ENCODE measurements at regions of chr7 and their contacts with region 1.

Region 1: GRCh38 chr7:35985126-35985754 is 167.8 kb upstream of the EEPD1 start:
- DNase-seq: peak; percentile 89 to 92
- ATAC-seq: peak; percentile 91
- H3K4me3 ChIP-seq: no peak overlapping the region
- H3K27ac ChIP-seq: no peak overlapping the region
- H3K4me1 ChIP-seq: peaks cover 3 to 4% of the 10 kb centered on the region in 2 donors
- H3K27me3 ChIP-seq: no peaks in the 10 kb centered on the region

Region 2: DNA sequence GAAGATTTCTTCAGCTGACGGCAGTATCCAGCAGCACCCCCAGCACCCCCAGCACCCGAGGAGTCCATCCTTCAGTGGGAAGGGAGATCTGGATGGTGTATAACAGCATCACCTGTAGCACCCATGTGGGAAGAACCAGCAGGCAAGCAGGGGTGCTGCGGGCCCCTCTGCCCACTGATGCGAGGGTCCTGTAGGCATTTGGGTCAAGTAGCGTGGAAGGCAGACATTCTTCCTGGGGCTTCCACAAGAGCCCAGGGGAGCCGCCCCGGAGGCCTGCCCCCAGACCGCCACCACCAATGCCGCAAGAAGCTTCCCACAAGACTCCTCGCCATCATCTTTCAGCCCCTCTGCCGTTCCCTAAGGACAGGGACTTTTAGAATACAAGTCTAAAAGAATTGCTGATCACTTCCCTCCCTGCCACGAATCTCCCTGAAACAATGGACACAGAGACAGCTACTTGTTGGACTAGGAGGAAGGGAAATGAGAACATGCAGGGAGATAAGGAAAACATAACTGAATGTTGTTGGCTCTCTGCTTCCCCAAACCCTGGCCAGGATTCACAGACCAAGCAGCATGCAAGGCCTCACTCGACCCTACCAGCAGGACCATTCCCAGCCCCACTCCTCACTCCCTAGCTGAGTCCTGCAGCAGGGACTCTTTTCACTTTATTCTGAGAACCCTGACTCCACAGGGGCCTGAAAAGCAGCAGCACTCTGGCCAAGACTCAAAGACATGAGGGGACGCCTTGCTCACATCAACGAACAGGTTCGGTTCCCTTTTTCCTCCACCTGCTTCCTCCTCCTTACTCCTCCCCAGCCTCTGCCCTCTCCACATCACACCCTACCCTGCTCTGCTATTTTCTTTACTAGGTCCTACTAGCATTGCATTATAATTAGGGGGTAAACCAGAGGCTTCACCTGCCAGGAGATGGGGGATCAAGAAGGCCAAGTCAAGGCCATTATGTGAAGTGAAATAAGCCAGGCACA is 454.8 kb before region 1 on chr7:
- intact Hi-C with region 1: no loop called
- DNase-seq: no peak
- ATAC-seq: no peak
- H3K4me3 ChIP-seq: no peak overlapping the region
- H3K27ac ChIP-seq: no peak overlapping the region
- H3K4me1 ChIP-seq: no peaks in the 10 kb centered on the region
- H3K27me3 ChIP-seq: no peaks in the 10 kb centered on the region

Region 3: DNA sequence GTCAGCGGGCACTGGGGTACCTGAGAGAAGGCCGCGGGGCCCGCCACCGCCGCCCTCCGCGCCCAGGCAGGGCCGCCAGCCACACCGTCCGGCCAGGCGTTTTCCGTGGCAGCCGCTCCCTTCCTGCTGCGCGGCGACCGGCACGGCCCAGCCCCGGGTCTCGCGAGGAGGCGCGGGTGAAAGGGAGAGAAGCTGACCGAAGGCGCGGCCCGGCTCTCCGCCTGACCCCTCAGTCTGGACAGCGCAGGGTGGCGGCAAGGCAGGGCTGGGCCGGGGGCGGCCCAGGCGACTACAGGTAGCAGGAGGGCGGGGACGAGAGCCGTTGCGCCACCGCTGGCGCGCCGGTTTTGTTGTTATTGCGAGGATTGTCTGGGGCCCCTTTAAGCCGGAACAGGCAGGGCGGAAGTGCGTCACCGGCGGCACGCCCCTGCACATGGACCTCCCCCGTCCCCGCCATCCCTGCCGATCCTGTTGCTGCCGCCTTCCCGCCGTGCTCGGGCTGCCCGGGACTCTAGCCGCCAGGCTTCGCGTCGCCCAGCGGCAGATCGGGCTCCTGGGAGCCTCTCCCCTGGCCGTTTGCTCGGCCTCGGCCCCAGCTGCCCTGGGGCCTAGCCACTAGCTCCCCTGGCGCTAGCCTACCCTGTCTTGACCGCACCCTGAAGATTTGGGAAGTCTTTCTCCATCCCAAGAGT is 290.3 kb before region 1 on chr7 and contains the start of gene HERPUD2:
- intact Hi-C with region 1: loop called in 1 of 2 experiments (anchors 10 kb)
- DNase-seq: peak; percentile 96 to 97
- ATAC-seq: peak; percentile 98
- H3K4me3 ChIP-seq: peak within 1 kb of the TSS; percentile 90
- H3K27ac ChIP-seq: peak within 1 kb of the TSS; percentile 37 to 44
- H3K4me1 ChIP-seq: peaks cover 0 to 6% of the 10 kb centered on the region in 2 donors
- H3K27me3 ChIP-seq: no peaks in the 10 kb centered on the region
- total RNA-seq, gene HERPUD2: 24.7 to 26.4 TPM

Region 4: DNA sequence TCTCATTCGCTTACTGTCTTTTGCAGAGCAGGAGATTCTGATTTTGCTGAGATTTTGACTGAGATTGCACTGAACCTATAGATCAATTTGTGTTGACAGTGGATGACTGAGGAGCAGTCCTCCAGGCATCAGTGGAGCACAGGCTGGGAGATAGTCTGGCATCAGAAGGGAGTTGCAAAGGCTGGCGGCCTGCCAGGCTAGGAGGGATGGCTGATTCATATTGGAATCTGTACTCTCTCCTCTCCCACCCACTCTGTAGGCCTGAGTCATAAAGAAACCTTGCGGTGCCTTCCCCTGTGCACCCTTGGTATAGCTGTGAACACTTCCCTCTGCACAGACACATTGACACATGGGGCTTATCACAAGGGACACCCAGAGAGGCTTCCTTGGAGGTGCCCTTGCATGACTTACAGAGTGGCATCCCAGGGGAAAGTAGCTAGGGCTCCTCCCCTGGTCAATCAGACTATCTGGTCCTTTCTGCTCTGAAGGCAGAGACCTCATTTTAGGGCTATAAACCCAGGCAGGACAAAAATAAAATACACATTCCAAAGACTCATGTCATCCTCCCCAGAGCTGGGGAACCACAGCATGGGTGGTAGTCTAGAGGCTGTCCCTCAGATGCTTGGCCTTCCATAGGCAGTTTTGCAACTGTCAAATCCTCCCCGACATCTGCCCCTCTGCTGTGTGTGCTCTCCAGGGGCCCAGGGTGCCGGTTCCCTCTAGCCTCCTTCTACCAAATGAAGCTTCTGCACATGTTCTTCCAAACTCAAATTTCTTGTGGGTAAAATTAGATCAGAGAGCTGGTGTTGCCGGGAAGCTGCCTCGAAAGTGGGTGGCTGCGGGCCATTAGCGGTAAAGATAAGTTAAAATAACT is 130.4 kb after region 1 on chr7:
- intact Hi-C with region 1: loop called in 1 of 2 experiments (anchors 2 kb)
- DNase-seq: peak; percentile 91 to 96
- ATAC-seq: peak; percentile 61
- H3K4me3 ChIP-seq: no peak overlapping the region
- H3K27ac ChIP-seq: peak overlapping the region; percentile 61 to 100
- H3K4me1 ChIP-seq: peaks cover 5 to 9% of the 10 kb centered on the region in 2 donors
- H3K27me3 ChIP-seq: no peaks in the 10 kb centered on the region

Region 5: DNA sequence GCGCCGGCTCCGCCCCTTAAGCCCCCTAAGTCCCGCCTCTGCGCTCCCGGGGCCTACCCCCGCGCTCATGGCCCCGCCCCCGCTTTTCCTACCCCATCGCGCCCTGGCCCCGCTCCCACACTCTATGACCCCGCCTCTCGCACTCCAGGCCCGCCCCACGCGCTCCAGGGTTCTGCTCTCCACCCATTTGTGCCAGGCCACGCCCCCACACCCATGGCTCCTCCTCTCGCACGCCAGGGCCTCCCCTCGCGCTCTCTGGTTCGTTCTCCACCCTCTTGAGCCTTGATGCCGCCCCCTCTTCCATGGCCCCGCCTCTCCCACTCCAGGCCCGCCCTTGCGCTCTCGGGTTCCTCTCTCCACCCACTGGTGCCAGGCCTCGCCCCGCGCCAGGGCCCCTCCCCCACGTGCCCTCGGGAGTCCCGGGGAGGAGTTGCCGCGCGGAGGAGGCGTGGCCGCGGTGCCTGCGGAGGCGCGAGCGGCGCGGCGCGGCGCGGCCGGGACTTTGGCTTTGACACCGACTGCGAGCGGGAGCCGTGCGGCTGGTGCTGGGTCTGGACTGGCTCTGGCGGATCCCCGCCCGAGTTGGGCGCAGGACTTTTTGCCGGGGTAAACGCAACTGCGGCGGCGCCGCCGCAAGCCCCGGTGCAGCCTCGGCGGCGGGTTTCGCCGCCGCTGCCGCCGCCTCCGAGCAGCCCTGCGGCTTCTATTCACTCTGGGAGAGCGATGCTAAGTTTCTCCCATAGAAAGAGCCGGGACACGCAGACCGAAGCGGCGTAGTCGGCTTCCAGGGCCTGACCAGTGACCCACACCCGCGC is 167.7 kb after region 1 on chr7 and contains the start of gene EEPD1:
- intact Hi-C with region 1: loop called in 1 of 2 experiments (anchors 5 kb)
- DNase-seq: peak; percentile 100
- ATAC-seq: peak; percentile 98
- H3K4me3 ChIP-seq: peak within 1 kb of the TSS; percentile 79 to 90
- H3K27ac ChIP-seq: peak within 1 kb of the TSS; percentile 3 to 80
- H3K4me1 ChIP-seq: peaks cover 0 to 4% of the 10 kb centered on the region in 2 donors
- H3K27me3 ChIP-seq: no peaks in the 10 kb centered on the region
- total RNA-seq, gene EEPD1: 14.4 to 15.4 TPM

Region 6: DNA sequence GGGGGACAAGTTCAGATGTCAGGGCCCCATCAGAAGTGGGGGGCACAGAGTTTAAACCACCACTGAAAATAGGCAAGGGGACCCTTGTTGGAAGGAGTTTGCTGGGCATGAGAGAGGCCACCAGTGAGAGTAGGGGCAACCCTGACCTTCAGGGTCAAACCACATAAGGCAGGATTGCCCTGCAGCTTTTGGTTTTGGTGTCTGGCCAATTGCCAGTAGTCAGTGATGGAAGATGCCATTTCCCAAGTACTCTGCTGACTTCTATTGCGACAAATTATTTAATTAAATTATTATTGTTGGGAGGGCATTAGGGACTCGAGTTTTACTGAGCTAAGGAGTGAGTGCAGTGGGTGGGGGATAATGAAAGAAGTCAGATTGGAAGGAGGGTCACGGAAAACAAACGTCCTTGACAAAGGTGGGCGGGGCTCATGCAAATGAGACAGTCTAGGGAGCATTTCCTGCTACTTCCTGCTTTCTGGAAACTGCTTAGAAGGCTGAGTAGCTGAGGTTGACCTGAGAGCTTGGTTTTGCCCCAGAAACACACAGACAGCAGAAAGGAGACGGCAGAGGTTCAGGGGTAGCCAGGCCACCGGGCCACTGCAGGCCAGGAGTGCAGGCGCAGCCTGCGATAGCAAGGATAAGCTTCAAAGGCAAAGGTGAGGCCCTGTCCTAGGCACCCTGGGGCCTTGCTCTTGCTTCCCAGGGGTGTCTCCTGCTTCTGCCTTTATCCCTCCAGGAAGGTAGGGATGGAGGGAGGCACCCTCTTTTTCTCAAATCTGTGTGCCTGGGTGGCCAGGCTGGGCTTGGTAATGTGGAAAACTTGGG is 330.3 kb after region 1 on chr7:
- intact Hi-C with region 1: loop called (anchors 2 kb)
- DNase-seq: no peak
- ATAC-seq: no peak
- H3K4me3 ChIP-seq: no peak overlapping the region
- H3K27ac ChIP-seq: no peak overlapping the region
- H3K4me1 ChIP-seq: no peaks in the 10 kb centered on the region
- H3K27me3 ChIP-seq: no peaks in the 10 kb centered on the region